ENCODE measurements at regions of chr11 and their contacts with region 1.

Region 1: DNA sequence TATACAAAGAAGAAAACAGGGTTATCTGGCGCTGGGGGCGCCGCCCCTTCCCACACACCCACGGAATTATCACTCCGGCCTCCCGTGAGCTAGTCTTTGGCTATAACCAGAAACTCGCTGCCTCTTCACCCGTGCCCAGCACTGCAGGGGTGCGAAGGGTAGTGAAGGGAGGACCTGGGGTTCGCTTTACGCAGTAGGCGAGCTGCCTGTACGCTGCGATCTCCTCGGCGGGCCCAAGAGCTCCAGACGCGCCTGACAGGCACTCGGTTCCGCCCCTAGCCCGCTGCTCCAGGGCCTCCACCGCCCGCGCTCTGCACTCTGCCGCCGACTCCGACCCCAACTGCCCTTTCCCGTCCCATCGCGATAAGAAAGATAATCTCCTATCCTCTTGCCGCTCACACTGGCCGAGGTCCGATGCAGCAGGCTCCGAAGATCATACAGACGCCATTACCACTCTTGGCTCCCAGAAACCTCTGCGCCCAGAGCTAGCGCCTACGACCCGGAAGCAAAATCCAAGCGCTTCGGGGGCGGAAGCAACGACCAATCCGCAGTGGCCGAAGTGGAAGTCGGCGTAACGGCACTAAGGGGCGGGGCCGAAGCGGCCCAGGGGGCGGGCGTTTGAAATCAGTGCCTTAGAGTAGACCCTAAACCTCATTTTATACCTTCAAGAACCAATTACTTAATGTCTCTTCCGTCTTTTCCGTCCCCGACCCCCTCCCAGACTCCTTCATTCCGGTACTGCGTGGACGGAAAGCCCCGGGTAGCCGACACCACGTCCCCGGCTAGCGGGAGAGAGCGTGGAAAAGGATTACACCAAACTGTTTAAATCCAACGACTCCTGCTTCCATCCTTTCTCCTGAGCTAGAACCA is at the starts of genes CWC15 and KDM4D:
- DNase-seq: peak; percentile 84
- ATAC-seq: peak; percentile 99
- H3K4me3 ChIP-seq: peak within 1 kb of the TSS; percentile 75 to 82
- H3K27ac ChIP-seq: peak within 1 kb of the TSS; percentile 51
- H3K4me1 ChIP-seq: peaks cover 7 to 14% of the 10 kb centered on the region in 2 experiments; a peak in 3 of 4 replicates
- H3K27me3 ChIP-seq: no peaks in the 10 kb centered on the region
- CTCF ChIP-seq: no peak
- POLR2A ChIP-seq: peak; percentile 88
- RAD21 ChIP-seq: no peak
- total RNA-seq, gene CWC15: 47.6 TPM
- total RNA-seq, gene KDM4D: 2.1 TPM

Region 2: DNA sequence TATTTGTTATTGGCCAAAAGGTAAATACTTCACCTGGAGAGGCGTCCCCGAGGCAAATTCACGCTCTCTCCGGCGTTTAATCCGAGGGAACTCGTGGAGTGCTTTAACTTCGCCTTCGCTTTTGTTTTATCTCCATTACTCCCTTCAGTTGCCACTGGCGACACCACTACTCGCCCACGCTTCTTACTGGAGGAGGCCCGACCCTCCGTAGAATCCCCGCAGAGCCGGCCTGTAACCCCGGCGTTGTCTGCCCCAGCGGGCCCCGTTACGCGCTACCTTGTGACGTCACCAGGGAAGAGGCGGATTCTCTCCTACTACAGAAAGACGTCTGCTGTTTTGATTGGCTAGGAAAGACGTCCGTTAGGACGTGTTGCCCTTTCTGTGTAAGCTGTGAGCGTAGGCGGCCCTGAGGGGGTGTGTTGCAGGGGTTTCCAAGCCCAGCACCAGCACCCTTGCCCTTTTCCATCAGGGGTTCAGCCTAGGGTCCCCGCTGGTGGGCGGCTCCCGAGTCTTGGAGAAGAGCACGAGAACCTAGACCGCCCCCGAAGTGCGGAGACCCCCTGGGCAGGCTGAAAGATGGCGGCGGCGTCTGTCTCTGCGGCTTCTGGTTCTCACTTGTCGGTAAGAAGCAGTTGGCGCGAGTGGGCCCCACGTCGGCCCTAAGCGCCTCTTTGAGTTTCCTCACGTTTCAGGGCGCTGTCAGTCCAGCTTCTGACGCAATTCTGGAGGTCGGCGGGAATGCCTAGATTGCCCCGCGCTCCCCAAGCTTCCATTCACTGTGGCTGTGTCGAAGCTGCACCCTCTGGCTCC is 817.0 kb after region 1 on chr11 and contains the start of gene CEP57:
- CTCF ChIA-PET with region 1: no interaction called
- POLR2A ChIA-PET with region 1: no interaction called
- RAD21 ChIA-PET with region 1: no interaction called
- intact Hi-C with region 1: loop called (anchors 10 kb)
- DNase-seq: peak; percentile 97
- ATAC-seq: peak; percentile 78
- H3K4me3 ChIP-seq: peak within 1 kb of the TSS; percentile 76 to 87
- H3K27ac ChIP-seq: peak within 1 kb of the TSS; percentile 77
- H3K4me1 ChIP-seq: peaks cover 9 to 18% of the 10 kb centered on the region in 2 experiments; a peak in 3 of 4 replicates
- H3K27me3 ChIP-seq: no peaks in the 10 kb centered on the region
- CTCF ChIP-seq: no peak
- POLR2A ChIP-seq: peak; percentile 73
- RAD21 ChIP-seq: no peak
- total RNA-seq, gene CEP57: 43.3 TPM

Region 3: DNA sequence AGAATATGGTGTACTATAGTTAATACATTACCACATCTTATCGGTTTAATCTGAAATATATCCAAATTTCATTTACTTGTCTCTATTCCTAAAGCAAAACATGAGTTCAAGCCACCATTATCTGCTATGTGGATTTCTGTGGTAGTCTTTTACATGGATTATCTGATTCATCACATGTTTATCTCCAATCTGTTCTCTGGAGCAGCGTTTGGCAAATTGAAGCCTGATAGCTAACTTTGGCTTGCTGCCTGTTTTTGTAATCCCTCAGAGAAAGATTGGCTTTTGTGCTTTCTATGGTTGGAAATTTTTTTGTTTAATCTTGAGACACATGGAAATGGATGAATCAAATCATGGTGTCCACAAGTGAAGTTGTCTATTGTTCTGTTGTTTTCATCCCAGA is 1690.8 kb after region 1 on chr11:
- CTCF ChIA-PET with region 1: no interaction called
- POLR2A ChIA-PET with region 1: no interaction called
- RAD21 ChIA-PET with region 1: no interaction called
- intact Hi-C with region 1: no loop called
- DNase-seq: no peak
- ATAC-seq: no peak
- H3K4me3 ChIP-seq: no peak overlapping the region
- H3K27ac ChIP-seq: no peak overlapping the region
- H3K4me1 ChIP-seq: no peaks in the 10 kb centered on the region
- H3K27me3 ChIP-seq: no peaks in the 10 kb centered on the region
- CTCF ChIP-seq: no peak
- POLR2A ChIP-seq: no peak
- RAD21 ChIP-seq: no peak